ENCODE measurements at regions of chr21 and their contacts with region 1.

Region 1: GRCh38 chr21:32257962-32258785 is 20.7 kb downstream of the MIS18A start:
- DNase-seq: peak; percentile 70 to 83
- H3K4me3 ChIP-seq: no peak overlapping the region
- H3K27ac ChIP-seq: peak overlapping the region; percentile 73 to 76
- H3K4me1 ChIP-seq: peaks cover 0 to 37% (median 22%) of the 10 kb centered on the region in 4 donors
- H3K27me3 ChIP-seq: no peaks in the 10 kb centered on the region
- CTCF ChIP-seq: peak; percentile 69 to 89

Region 2: GRCh38 chr21:31798842-31799704 is 459.1 kb before region 1 on chr21:
- intact Hi-C with region 1: loop called (anchors 10 kb)
- DNase-seq: no peak
- H3K4me3 ChIP-seq: no peak overlapping the region
- H3K27ac ChIP-seq: no peak overlapping the region
- H3K4me1 ChIP-seq: no peaks in the 10 kb centered on the region
- H3K27me3 ChIP-seq: peaks cover 0 to 26% of the 10 kb centered on the region in 2 donors
- CTCF ChIP-seq: no peak

Region 3: DNA sequence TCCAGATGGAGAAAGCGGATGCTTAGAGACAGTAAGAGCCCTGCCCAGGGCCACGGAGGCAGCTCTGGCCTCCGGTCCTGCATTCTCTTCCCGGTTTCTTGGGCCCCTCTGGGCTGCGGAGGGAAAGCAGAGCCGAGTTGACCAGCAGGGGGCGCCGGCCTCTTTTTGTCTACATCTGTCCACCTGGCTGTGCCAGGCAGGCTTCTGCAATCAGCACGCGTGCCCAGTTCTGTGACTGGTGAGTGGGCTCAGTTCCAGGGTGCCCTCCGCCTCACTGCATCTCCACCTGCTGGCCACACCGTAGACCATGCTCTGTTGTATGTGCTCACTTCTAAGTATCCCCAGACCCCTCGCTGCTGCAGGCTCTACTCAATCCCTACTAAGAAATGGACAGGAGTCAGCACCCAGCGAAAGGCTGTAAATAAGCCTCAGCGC is 392.1 kb before region 1 on chr21:
- intact Hi-C with region 1: loop called (anchors 2 kb)
- DNase-seq: peak; percentile 75 to 88
- H3K4me3 ChIP-seq: no peak overlapping the region
- H3K27ac ChIP-seq: no peak overlapping the region
- H3K4me1 ChIP-seq: peaks cover 0 to 9% (median 3%) of the 10 kb centered on the region in 4 donors
- H3K27me3 ChIP-seq: peaks cover 0 to 10% of the 10 kb centered on the region in 2 donors
- CTCF ChIP-seq: peak; percentile 76 to 86

Measured in tibial artery (tissue), 4 donors.